ENCODE measurements at regions of chr14 and their contacts with region 1.

Region 1: DNA sequence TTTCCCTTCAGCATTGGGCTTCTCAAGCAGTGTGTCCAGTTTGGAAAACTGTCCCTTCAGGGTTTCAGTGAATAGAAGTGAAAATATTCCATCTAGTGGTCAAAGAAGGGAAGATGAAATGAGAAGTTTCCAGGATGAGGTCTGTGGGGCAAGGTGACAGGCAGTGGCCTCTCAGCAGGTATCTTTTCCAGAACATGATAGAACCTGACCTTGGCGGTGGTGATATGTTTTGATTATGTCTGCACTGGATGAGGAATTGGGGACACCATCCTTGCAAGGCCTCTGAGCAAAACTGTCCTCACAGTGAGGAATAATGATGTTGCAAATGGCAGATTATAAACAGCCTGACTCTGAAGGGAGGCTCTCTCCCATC is 4.7 kb downstream of the GPX2 start:
- DNase-seq: no peak
- H3K4me3 ChIP-seq: no peak overlapping the region
- H3K27ac ChIP-seq: no peak overlapping the region
- H3K4me1 ChIP-seq: peaks cover 6% of the 10 kb centered on the region
- H3K27me3 ChIP-seq: no peaks in the 10 kb centered on the region
- CTCF ChIP-seq: no peak
- POLR2A ChIP-seq: no peak

Region 2: DNA sequence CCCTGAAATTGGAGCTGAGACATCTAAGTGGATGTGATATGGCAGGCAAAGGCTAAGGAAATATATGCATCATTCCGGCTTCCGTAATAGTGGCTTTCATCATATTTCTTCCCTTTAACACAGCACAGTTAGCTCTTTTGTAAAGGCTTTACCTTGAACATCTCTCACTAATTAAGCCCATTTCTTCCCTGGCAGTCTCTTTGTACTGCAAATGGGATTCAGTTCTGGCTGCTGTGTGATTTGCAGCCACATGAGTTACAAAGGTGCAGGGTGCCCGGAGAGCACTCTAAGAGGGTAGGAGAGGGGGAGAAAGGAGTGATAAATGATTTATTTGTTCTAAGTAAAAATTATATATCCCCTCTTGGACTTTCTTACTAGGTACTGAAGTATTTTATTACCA is 1316.2 kb after region 1 on chr14:
- intact Hi-C with region 1: loop called (anchors 10 kb)
- DNase-seq: no peak
- H3K4me3 ChIP-seq: no peak overlapping the region
- H3K27ac ChIP-seq: no peak overlapping the region
- H3K4me1 ChIP-seq: no peaks in the 10 kb centered on the region
- H3K27me3 ChIP-seq: no peaks in the 10 kb centered on the region
- CTCF ChIP-seq: no peak
- POLR2A ChIP-seq: no peak